Right ventricle myocardium inferior (tissue), 1 donor: ENCODE measurements at regions of chr22 and their contacts with region 1.

Region 1: GRCh38 chr22:28442264-28442710 is 237.4 kb downstream of the TTC28 start:
- DNase-seq: peak; percentile 88
- ATAC-seq: peak; percentile 92

Region 2: GRCh38 chr22:28051787-28052356 is 390.4 kb before region 1 on chr22:
- intact Hi-C with region 1: loop called (anchors 2 kb)
- DNase-seq: peak; percentile 76
- ATAC-seq: peak; percentile 73

Region 3: DNA sequence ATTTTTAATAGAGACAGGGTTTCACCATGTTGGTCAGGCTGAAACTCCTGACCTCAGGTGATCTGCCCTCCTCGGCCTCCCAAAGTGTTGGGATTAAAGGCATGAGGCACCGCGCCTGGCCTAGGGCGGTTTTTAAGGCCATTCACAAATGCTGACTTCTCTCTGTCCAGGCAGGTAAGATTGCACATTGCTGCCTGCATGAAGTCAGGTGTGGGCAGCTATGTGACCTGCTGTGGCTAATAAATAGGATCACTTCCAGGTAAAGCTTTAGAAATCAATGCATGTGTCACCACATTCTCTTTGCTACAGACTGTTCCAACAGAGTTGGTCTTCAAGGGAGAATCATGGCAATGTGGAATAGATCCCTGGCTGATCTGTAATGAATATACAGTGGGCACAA is 262.9 kb before region 1 on chr22:
- intact Hi-C with region 1: loop called (anchors 5 kb)
- DNase-seq: no peak
- ATAC-seq: no peak

Region 4: DNA sequence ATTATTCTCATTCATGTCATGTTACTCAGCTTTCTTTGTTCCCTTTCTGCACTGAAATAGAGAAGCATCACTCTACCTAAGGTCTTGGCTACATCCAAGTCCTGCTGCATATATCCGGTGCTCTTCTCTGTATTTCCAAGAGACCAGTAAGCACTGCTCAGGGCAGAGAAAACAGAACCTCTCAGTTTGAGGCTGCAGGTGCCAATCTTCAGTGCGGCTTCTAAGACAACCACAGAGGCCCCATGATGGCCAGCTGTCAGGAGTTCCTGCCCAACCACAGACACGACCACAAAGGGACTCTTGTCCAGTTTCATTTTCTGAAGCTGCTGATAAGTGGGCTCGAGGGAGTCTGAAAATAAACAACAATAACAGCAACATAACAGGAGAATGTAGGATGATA is 144.8 kb before region 1 on chr22:
- intact Hi-C with region 1: loop called (anchors 5 kb)
- DNase-seq: no peak
- ATAC-seq: no peak

Region 5: DNA sequence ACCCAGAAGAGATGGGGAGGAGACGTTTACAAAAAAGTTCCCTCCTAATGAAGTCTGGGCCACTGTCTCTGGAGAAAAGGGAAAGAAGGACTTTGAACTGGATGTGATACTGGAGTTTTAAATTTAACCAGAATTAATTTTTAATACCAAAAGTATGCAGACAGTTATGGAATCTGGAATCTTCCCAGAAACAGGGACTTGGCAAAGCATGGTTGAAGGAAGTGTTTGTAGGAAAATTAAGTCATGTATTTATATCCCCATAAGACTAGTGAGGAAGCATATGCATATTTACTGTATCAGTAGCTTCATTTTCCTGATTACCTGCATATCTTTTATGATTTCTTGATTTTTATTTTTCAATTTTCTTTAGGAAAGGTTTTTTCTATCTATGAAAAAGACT is 21.9 kb after region 1 on chr22:
- intact Hi-C with region 1: no loop called
- DNase-seq: no peak
- ATAC-seq: no peak

Region 6: GRCh38 chr22:28710112-28710511 is 267.8 kb after region 1 on chr22:
- intact Hi-C with region 1: no loop called
- DNase-seq: no peak
- ATAC-seq: no peak